ENCODE measurements at regions of chr14 and their contacts with region 1.

Region 1: DNA sequence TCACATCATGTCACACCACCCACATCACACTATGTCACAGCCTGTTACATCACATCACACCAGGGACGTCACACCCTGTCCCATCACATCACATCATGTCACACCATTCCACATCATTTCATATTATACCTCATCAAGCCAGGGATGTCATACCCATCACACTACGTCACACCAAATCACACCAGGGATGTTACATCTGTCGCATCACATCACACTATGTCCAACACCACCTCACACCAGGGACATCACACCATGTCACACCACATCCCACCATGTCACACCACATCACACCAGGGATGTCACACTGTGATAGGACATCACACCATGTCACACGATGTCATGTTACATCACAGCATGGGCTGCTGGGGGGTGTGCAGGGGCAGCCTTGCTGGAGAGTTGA is 110.6 kb downstream of the TMEM121 start:
- DNase-seq: no peak
- H3K4me3 ChIP-seq: no peak overlapping the region
- H3K4me3 Mint-ChIP-seq: no peak overlapping the region
- H3K27ac ChIP-seq: no peak overlapping the region
- H3K27ac Mint-ChIP-seq: no peak overlapping the region
- H3K4me1 ChIP-seq: no peaks in the 10 kb centered on the region
- H3K4me1 Mint-ChIP-seq: no peaks in the 10 kb centered on the region
- H3K27me3 ChIP-seq: no peaks in the 10 kb centered on the region
- H3K27me3 Mint-ChIP-seq: peaks cover 1 to 5% (median 5%) of the 10 kb centered on the region in 3 donors
- CTCF ChIP-seq: no peak

Region 2: DNA sequence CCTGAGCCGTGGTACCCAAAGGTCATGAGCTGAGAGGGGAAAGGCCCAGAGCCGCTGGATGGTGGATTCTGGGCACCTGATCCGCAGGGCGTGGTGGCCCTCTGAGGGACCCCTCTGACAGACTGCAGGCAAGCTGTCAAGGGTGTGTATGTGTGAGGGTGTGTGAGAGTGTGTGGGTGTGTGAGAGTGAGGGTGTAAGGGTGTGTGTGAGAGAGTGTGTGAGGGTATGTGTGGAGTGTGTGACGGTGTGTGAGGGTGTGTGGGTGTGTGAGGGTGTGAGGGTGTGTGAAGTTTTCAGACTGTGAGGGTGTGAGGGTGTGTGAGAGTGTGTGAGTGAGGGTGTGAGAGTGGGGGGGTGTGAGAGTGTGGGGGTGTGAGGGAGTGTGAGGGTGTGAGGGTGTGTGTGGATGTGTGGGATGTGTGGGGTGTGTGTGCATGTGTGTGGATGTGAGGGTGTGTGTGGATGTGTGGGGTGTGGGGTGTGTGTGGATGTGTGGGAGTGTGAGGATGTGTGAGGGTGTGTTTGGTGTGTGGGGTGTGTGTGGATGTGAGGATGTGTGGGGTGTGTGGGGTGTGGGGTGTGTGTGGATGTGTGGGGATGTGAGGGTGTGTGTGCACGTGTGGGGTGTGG is 46.1 kb after region 1 on chr14:
- intact Hi-C with region 1: no loop called
- DNase-seq: no peak
- H3K4me3 ChIP-seq: no peak overlapping the region
- H3K4me3 Mint-ChIP-seq: no peak overlapping the region
- H3K27ac ChIP-seq: no peak overlapping the region
- H3K27ac Mint-ChIP-seq: peak overlapping the region in 1 of 7 donors; percentile 67
- H3K4me1 ChIP-seq: no peaks in the 10 kb centered on the region
- H3K4me1 Mint-ChIP-seq: peaks cover 3% of the 10 kb centered on the region
- H3K27me3 ChIP-seq: no peaks in the 10 kb centered on the region
- H3K27me3 Mint-ChIP-seq: peaks cover 0 to 7% (median 6%) of the 10 kb centered on the region in 3 donors
- CTCF ChIP-seq: no peak

Region 3: DNA sequence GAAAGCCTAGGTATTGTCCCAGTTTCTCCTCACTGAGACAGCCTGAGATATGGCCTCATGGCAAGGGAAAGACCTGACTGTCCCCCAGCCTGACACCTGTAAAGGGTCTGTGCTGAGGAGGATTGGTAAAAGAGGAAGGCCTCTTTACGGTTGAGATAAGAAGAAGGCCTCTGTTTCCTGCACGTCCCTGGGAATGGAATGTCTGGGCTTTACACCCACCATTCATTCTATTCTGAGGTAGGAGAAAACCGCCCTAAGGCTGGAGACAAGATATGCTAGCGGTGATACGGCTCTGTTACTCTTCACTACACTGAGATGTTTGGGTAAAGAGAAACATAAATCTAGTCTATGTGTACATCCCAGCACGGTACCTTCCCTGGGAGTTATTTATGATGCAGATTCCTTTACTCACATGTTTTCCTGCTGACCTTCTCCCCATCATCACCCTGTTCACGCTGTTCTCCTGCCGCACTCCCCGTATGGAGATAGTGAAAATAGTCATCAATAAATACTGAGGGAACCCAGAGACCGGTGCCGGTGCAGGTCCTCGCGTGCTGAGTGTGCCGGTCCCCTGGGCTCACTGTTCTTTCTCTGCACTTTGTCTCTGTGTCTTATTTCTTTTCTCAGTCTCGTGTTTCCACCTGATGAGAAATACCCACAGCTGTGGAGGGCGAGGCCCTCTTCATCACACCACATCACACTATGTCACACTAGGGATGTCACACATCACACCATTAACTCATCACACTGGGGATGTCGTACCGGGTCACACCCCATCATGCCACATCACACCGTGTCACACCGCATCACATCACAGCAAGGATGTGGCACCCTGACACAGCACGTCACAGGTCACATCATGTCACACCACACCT is 96.0 kb after region 1 on chr14:
- intact Hi-C with region 1: loop called in 1 of 2 experiments (anchors 5 kb)
- DNase-seq: no peak
- H3K4me3 ChIP-seq: no peak overlapping the region
- H3K4me3 Mint-ChIP-seq: no peak overlapping the region
- H3K27ac ChIP-seq: no peak overlapping the region
- H3K27ac Mint-ChIP-seq: no peak overlapping the region
- H3K4me1 ChIP-seq: no peaks in the 10 kb centered on the region
- H3K4me1 Mint-ChIP-seq: no peaks in the 10 kb centered on the region
- H3K27me3 ChIP-seq: no peaks in the 10 kb centered on the region
- H3K27me3 Mint-ChIP-seq: peaks cover 0 to 2% (median 0%) of the 10 kb centered on the region in 3 donors
- CTCF ChIP-seq: no peak

Region 4: DNA sequence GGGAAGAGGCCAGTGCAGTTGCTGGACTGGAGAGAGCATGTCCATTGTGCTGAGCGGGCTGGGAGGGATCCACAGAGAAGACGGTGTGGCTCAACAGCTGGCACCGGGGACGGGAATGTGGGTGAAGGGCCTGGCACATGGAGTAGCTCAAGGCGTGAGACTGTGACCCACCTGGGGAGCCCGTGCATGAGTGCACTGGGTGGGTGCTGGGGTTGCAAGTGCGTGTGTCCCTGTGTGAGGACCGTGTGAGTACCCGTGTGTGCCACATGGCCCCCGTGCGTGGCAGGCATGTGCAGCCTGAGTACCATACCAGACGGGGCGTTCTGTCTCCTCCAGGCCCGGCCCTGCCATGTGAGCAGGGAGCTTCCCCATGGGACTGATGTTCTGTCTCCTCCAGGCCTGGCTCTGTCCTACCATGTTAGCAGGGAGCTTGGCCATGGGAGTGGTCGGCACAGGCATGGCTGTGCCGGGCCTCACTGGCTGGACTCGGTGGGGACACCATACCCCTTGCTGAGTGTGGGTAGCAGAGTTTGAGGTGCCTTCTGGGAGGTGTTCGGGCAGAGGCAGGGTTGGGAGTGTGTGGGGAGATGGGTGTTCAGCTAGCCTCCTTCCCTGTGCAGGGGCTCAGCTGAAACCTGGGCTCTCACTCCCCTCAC is 123.9 kb after region 1 on chr14:
- intact Hi-C with region 1: no loop called
- DNase-seq: no peak
- H3K4me3 ChIP-seq: no peak overlapping the region
- H3K4me3 Mint-ChIP-seq: no peak overlapping the region
- H3K27ac ChIP-seq: no peak overlapping the region
- H3K27ac Mint-ChIP-seq: no peak overlapping the region
- H3K4me1 ChIP-seq: no peaks in the 10 kb centered on the region
- H3K4me1 Mint-ChIP-seq: no peaks in the 10 kb centered on the region
- H3K27me3 ChIP-seq: no peaks in the 10 kb centered on the region
- H3K27me3 Mint-ChIP-seq: peaks cover 0 to 3% (median 0%) of the 10 kb centered on the region in 3 donors
- CTCF ChIP-seq: no peak

Region 5: DNA sequence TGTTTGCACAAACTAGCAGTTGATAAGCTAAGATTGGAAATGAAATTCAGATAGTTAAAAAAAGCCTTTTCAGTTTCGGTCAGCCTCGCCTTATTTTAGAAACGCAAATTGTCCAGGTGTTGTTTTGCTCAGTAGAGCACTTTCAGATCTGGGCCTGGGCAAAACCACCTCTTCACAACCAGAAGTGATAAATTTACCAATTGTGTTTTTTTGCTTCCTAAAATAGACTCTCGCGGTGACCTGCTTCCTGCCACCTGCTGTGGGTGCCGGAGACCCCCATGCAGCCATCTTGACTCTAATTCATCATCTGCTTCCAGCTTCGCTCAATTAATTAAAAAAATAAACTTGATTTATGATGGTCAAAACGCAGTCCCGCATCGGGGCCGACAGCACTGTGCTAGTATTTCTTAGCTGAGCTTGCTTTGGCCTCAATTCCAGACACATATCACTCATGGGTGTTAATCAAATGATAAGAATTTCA is 225.1 kb after region 1 on chr14:
- intact Hi-C with region 1: no loop called
- DNase-seq: no peak
- H3K4me3 ChIP-seq: no peak overlapping the region
- H3K4me3 Mint-ChIP-seq: peak overlapping the region in 1 of 2 donors; percentile 72
- H3K27ac ChIP-seq: no peak overlapping the region
- H3K27ac Mint-ChIP-seq: no peak overlapping the region
- H3K4me1 ChIP-seq: no peaks in the 10 kb centered on the region
- H3K4me1 Mint-ChIP-seq: peaks cover 10% of the 10 kb centered on the region
- H3K27me3 ChIP-seq: peaks cover 15 to 78% of the 10 kb centered on the region in 2 donors
- H3K27me3 Mint-ChIP-seq: peaks cover 62 to 84% (median 75%) of the 10 kb centered on the region in 3 donors
- CTCF ChIP-seq: no peak

Measured in CD14-positive monocyte (primary cell).